Calu3 (cell line): ENCODE measurements at regions of chr15 and their contacts with region 1.

Region 1: DNA sequence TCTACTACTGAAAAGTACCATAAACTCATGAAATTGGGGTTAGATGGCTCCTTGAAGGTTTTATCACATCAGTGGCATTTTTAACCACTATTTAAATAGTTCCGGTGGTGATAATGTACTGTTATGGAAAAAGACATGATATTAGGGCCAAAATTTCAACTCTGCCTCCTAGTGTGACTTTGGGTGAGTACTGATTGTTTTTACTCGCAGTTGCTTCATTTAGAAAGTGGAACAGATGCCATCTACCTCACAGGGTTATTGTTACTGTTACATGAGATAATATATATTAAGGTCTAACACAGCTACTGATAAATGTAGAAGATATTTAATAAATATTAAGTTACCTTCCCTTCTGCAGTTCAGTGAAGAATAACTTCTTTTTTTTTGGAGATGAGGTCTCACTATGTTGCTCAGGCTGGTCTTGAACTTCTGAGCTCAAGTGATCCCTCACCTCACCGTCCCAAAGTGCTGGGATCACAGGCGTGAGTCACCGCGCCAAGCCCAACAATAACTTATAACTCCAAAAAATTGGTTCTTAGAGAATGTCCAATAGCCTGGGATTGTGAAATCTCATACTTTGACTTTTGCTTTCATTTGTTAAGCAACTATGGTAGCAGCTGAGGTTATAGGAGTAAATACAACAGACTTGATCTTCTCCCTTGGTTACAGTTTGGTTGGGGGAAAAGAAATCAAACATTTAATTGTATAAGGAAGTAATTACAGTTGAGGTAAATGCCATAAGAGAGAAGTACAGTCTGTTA is 48.3 kb downstream of the MEF2A start:
- DNase-seq: no peak
- H3K4me3 Mint-ChIP-seq: peak overlapping the region; percentile 6
- H3K27ac Mint-ChIP-seq: peak overlapping the region; percentile 84
- H3K4me1 Mint-ChIP-seq: peaks cover 20% of the 10 kb centered on the region
- H3K27me3 Mint-ChIP-seq: no peaks in the 10 kb centered on the region
- CTCF ChIP-seq: no peak

Region 2: GRCh38 chr15:99565299-99566156 is 48.5 kb before region 1 on chr15 and contains the start of gene MEF2A:
- CTCF ChIA-PET with region 1: no interaction called
- intact Hi-C with region 1: loop called (anchors 5 kb)
- DNase-seq: peak; percentile 97
- H3K4me3 Mint-ChIP-seq: peak within 1 kb of the TSS; percentile 93
- H3K27ac Mint-ChIP-seq: peak within 1 kb of the TSS; percentile 97
- H3K4me1 Mint-ChIP-seq: peaks cover 16% of the 10 kb centered on the region
- H3K27me3 Mint-ChIP-seq: peaks cover 39% of the 10 kb centered on the region
- CTCF ChIP-seq: no peak
- total RNA-seq, gene MEF2A: 33.6 and 35.0 TPM in 2 replicates

Region 3: GRCh38 chr15:99845009-99845408 is 230.9 kb after region 1 on chr15:
- CTCF ChIA-PET with region 1: no interaction called
- intact Hi-C with region 1: no loop called
- DNase-seq: no peak
- H3K4me3 Mint-ChIP-seq: no peak overlapping the region
- H3K27ac Mint-ChIP-seq: no peak overlapping the region
- H3K4me1 Mint-ChIP-seq: no peaks in the 10 kb centered on the region
- H3K27me3 Mint-ChIP-seq: no peaks in the 10 kb centered on the region
- CTCF ChIP-seq: no peak